Right ventricle myocardium inferior (tissue), 1 donor: ENCODE measurements at regions of chr5 and their contacts with region 1.

Region 1: DNA sequence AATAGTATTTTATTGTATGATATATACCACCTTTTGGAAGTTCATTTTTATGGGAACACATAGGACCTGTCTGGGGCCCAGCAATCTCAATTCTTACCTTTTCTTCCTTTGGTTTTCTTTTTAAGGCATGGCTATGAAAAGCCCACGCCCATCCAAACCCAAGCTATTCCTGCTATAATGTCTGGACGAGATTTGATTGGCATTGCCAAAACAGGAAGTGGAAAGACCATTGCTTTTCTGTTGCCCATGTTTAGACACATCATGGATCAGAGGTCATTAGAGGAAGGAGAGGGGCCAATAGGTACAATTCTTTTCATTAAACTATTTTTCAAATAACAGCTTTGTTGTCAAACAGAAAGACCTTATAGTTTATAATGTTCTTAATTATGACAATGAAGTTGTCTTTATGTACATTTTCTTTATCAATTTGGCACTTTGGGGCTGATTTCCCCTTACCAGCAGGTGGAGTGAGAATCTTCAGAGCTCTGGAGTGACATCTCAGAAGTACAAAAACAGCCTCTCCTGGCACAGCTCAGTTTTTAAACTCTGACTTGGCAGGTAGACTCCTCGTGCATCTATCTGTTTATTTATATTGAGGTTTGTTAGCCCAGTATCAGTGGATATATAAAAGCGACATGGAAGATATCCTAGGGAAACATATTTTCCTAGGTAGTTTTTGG is 25.8 kb downstream of the DDX46 start:
- DNase-seq: no peak
- ATAC-seq: no peak

Region 2: DNA sequence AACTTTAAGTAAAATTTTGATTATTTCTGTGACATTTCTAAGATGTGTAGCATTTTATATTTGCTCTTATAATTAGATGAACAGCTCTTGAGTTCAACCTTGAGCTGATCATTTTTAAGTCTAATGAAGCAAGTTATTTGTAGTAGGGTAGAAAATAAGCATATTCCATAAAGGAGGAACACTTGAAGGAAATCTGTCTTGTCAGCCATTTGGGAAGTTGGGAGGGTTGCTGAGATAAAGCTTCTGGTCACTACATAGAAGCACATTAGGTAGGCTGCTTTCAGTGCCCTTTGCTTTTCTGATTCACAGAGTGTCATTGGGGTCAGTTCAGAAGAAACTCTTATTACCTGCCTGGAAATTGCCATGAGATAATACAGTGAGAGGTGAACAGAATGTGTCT is 91.7 kb before region 1 on chr5:
- intact Hi-C with region 1: loop called (anchors 10 kb)
- DNase-seq: no peak
- ATAC-seq: no peak

Region 3: GRCh38 chr5:135466178-135467050 is 682.0 kb after region 1 on chr5:
- intact Hi-C with region 1: no loop called
- DNase-seq: peak; percentile 84
- ATAC-seq: peak; percentile 88

Region 4: GRCh38 chr5:135560858-135561257 is 776.5 kb after region 1 on chr5:
- intact Hi-C with region 1: no loop called
- DNase-seq: peak; percentile 84
- ATAC-seq: peak; percentile 74

Region 5: GRCh38 chr5:135986891-135987401 is 1202.6 kb after region 1 on chr5:
- intact Hi-C with region 1: no loop called
- DNase-seq: no peak
- ATAC-seq: peak; percentile 39